ENCODE measurements at regions of chr12 and their contacts with region 1.

Region 1: DNA sequence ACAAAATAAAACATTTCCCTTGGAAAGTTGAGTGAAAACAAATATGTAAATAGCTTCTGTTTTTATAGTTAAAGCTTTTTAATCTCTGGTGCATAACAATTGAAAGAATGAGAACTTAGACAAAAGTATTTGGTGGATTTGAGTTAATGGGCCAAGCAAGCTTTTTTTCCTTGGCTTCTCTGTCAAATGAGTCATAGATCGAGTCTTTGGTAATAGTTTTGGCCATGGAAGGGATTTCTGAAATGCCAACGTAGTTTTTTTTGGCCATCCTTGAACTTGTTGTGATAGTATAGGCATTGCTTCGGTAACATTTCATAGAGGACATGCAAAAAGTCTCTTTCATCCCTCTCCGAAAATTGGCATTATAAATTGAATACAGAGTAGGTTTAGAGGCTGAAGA is 34.9 kb downstream of the GPR19 start:
- DNase-seq: no peak
- H3K4me3 ChIP-seq: no peak overlapping the region
- H3K4me3 Mint-ChIP-seq: no peak overlapping the region
- H3K27ac Mint-ChIP-seq: no peak overlapping the region
- H3K4me1 ChIP-seq: no peaks in the 10 kb centered on the region
- H3K4me1 Mint-ChIP-seq: no peaks in the 10 kb centered on the region
- H3K27me3 ChIP-seq: no peaks in the 10 kb centered on the region
- H3K27me3 Mint-ChIP-seq: no peaks in the 10 kb centered on the region
- CTCF ChIP-seq: no peak

Region 2: DNA sequence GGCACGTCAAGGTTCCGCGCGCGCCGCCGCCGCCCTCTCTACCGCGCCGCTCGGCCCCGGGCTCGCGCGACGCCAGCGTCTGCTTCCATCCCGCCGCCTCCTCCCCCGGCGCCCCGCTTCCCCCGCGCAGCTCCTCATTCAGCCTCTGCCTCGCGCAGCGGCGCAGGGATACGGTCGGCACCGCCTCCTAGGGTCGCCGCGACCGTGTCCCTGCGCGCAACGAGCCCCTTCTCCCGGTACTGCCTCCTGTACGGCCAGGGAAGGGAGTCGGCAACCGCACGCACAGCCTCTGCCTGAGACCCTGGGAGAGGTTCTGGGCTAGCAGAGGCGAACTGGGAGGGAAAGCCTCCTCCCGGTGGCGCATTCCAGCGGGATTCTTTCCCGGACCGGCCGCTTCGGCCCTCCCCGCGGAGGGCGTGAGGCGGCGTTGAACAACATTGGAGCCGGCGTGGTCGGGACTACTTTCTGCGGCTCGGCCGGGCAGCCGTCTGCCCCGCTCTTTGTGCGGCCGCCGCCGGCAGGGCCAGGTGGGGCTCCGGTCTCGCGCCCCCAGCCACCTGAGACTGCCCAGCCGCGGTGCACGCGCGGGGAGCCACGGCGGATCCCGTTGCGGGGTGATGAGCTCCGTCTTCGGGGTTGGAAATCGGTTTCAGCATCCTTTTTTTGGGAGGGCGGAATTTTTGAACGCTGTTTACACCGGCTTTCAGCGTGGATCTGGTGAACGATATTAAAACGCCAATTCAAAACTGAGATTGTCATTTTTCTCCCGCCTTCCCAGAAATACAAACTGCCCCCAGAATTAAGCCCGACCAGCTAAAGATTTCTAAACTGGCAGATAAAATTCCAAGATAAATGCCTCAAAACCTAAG is 394.0 kb before region 1 on chr12 and contains the start of gene LRP6:
- CTCF ChIA-PET with region 1: no interaction called
- POLR2A ChIA-PET with region 1: no interaction called
- intact Hi-C with region 1: no loop called
- DNase-seq: peak; percentile 97 to 98
- H3K4me3 ChIP-seq: peak within 1 kb of the TSS; percentile 100
- H3K4me3 Mint-ChIP-seq: peak within 1 kb of the TSS; percentile 91
- H3K27ac Mint-ChIP-seq: peak within 1 kb of the TSS; percentile 99
- H3K4me1 ChIP-seq: peaks cover 12% of the 10 kb centered on the region; the same call in 1 of the 2 replicates
- H3K4me1 Mint-ChIP-seq: peaks cover 33% of the 10 kb centered on the region
- H3K27me3 ChIP-seq: no peaks in the 10 kb centered on the region
- H3K27me3 Mint-ChIP-seq: no peaks in the 10 kb centered on the region
- CTCF ChIP-seq: no peak
- total RNA-seq, gene LRP6: 72.7 and 78.4 TPM in 2 replicates

Region 3: DNA sequence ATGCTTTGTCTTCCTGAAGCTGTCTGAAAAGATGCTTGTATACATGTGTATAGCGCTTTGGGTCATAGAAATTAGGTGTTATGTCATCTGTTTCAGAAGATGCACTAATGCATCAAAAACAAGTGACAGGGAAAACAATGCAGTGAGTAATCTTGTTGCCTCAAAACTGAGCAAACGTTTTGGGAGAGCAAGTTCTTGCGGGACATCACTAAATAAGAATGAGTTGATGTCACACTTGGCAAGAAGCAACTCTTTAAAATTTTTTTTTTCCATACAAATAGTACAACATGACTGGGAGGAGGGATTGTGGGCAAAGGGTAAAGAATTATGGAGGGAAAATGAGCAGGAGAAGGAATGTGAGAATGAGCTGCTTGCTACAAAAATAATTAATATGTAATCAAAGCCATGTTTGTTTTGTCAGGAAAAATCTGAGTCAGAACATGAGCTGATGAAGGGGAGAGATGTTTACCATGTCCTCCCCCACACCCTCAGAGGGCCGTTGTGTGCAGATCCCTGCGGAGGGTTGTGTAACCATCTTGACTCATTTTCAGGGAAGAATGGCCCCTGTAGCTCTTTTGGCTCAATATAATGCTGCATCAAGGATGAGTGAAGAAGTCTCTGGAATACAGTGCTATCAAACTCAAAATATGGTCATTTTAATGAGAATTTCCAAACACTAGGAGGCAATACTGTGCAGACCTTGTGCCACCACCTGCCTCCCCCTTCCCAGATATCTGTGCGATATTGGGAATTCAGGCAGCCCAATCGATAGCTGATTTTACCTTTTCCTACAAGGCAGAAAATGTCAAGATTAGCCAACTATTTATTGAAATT is 262.8 kb before region 1 on chr12:
- CTCF ChIA-PET with region 1: no interaction called
- POLR2A ChIA-PET with region 1: interaction called, 3 read pairs
- intact Hi-C with region 1: loop called (anchors 1 kb)
- DNase-seq: peak; percentile 80 to 88
- H3K4me3 ChIP-seq: no peak overlapping the region
- H3K4me3 Mint-ChIP-seq: peak overlapping the region; percentile 14
- H3K27ac Mint-ChIP-seq: peak overlapping the region; percentile 69
- H3K4me1 ChIP-seq: peaks cover 61% of the 10 kb centered on the region
- H3K4me1 Mint-ChIP-seq: peaks cover 56% of the 10 kb centered on the region
- H3K27me3 ChIP-seq: no peaks in the 10 kb centered on the region
- H3K27me3 Mint-ChIP-seq: no peaks in the 10 kb centered on the region
- CTCF ChIP-seq: peak in 1 of 2 experiments; percentile 21

Region 4: GRCh38 chr12:12611512-12612306 is 49.4 kb before region 1 on chr12 and contains the start of gene CREBL2:
- CTCF ChIA-PET with region 1: interaction called, 3 read pairs
- POLR2A ChIA-PET with region 1: no interaction called
- intact Hi-C with region 1: loop called (anchors 1 kb)
- DNase-seq: peak; percentile 96
- H3K4me3 ChIP-seq: peak within 1 kb of the TSS; percentile 66
- H3K4me3 Mint-ChIP-seq: peak within 1 kb of the TSS; percentile 89
- H3K27ac Mint-ChIP-seq: peak within 1 kb of the TSS; percentile 57
- H3K4me1 ChIP-seq: peaks cover 11% of the 10 kb centered on the region
- H3K4me1 Mint-ChIP-seq: peaks cover 24% of the 10 kb centered on the region
- H3K27me3 ChIP-seq: no peaks in the 10 kb centered on the region
- H3K27me3 Mint-ChIP-seq: no peaks in the 10 kb centered on the region
- CTCF ChIP-seq: no peak
- total RNA-seq, gene CREBL2: 25.0 and 26.3 TPM in 2 replicates